A673 (cell line): ENCODE measurements at regions of chr7 and their contacts with region 1.

Region 1: GRCh38 chr7:122304319-122304975 is at the start of gene FEZF1:
- DNase-seq: peak; percentile 97
- H3K4me3 ChIP-seq: peak within 1 kb of the TSS; percentile 84
- H3K27ac ChIP-seq: peak within 1 kb of the TSS; percentile 100
- H3K4me1 ChIP-seq: peaks cover 15% of the 10 kb centered on the region
- H3K27me3 ChIP-seq: no peaks in the 10 kb centered on the region
- CTCF ChIP-seq: no peak
- total RNA-seq, gene FEZF1: 85.9 and 114 TPM in 2 replicates

Region 2: GRCh38 chr7:121824276-121824675 is 480.2 kb before region 1 on chr7:
- CTCF ChIA-PET with region 1: no interaction called
- POLR2A ChIA-PET with region 1: no interaction called
- intact Hi-C with region 1: no loop called
- DNase-seq: no peak
- H3K4me3 ChIP-seq: no peak overlapping the region
- H3K27ac ChIP-seq: no peak overlapping the region
- H3K4me1 ChIP-seq: no peaks in the 10 kb centered on the region
- H3K27me3 ChIP-seq: no peaks in the 10 kb centered on the region
- CTCF ChIP-seq: no peak

Region 3: DNA sequence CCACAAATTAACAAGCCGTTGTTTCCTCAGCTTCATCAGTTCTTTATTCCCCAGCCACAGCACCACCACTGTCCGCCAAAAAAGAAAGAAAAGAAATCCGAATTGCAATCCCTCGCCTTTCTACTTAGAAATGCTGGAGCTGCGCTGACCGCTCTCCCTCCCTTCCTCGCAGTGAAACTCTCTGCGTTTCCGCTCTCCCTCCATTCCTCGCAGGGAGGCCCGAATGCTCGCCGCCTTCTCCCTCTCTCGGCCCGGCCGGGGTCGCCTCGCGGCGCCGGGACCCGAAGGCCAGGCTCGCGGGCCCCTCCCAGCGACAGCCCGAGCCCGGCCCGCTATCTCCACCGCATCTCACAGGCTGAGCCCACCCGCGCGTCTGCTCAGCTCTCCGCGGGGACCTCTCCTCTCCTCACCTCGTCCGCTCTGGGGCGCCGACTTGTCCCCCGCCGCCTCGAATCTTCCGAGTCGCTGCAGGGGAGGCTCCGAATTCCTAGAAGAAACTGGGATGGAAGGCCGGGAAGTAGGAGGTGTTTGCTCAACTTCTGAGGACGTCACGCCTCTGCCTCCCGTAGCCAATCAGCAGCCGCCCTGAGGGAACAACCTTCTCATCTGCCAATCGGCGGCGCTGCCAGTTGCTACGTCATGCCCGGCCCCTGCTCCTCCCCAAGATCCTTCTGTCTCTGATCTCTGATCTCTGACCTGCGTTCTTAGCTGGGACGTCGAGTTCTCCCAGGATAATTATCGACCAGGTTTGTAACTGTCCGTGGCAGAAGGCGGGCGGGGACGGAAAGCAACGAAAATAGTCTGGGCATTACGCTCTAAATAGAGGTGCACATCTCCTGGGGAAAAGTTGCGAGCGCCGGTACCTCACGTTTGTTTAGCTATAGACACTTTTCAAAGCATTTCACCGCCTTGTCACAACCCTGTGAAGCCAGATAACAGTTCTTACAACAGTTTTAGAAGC is 160.4 kb before region 1 on chr7 and contains the start of gene AASS:
- CTCF ChIA-PET with region 1: no interaction called
- POLR2A ChIA-PET with region 1: no interaction called
- intact Hi-C with region 1: loop called (anchors 5 kb)
- DNase-seq: peak; percentile 98
- H3K4me3 ChIP-seq: peak within 1 kb of the TSS; percentile 82
- H3K27ac ChIP-seq: peak within 1 kb of the TSS; percentile 89
- H3K4me1 ChIP-seq: peaks cover 29% of the 10 kb centered on the region
- H3K27me3 ChIP-seq: no peaks in the 10 kb centered on the region
- CTCF ChIP-seq: no peak
- total RNA-seq, gene AASS: 38.8 and 44.4 TPM in 2 replicates

Region 4: GRCh38 chr7:122256036-122256435 is 48.4 kb before region 1 on chr7:
- CTCF ChIA-PET with region 1: no interaction called
- POLR2A ChIA-PET with region 1: no interaction called
- intact Hi-C with region 1: loop called (anchors 1 kb)
- DNase-seq: peak; percentile 81
- H3K4me3 ChIP-seq: no peak overlapping the region
- H3K27ac ChIP-seq: peak overlapping the region; percentile 41
- H3K4me1 ChIP-seq: peaks cover 44% of the 10 kb centered on the region
- H3K27me3 ChIP-seq: no peaks in the 10 kb centered on the region
- CTCF ChIP-seq: no peak

Region 5: DNA sequence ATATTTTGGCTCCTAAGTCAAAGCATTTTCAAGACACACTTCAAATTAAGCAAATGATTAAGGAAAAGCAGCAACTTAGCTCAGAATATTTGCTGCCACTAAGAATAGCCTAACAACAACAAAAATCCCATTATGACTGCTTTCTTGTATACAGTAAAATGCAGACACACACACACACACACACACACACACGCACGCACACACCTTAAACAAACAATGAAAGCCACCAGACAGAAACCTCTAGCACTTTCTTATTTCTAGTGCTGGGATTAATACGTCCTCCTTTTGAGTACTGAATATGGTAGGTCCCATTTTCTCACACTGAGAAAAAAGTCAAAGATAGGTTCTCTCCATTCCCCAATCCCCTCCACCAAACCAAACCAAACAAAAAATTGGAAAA is 23.5 kb after region 1 on chr7:
- CTCF ChIA-PET with region 1: no interaction called
- POLR2A ChIA-PET with region 1: no interaction called
- intact Hi-C with region 1: no loop called
- DNase-seq: no peak
- H3K4me3 ChIP-seq: no peak overlapping the region
- H3K27ac ChIP-seq: no peak overlapping the region
- H3K4me1 ChIP-seq: no peaks in the 10 kb centered on the region
- H3K27me3 ChIP-seq: no peaks in the 10 kb centered on the region
- CTCF ChIP-seq: no peak

Region 6: DNA sequence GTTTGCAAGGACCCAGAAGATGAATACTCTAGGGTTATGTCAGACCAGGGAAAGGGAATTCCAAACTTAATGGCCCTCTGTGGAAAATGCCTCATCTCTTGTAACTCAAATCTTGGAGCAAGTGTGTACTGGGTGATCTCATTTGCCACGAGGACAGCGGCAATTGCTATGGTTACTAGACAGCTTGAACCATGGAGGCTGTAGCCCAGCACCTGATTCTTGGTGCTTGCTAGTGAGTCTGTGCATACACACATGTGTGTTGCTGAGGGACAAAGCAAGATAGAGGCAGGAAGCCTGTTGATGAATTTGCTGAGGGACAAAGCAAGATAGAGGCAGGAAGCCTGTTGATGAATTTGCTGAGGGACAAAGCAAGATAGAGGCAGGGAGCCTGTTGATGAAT is 58.7 kb after region 1 on chr7:
- CTCF ChIA-PET with region 1: no interaction called
- POLR2A ChIA-PET with region 1: no interaction called
- intact Hi-C with region 1: no loop called
- DNase-seq: no peak
- H3K4me3 ChIP-seq: no peak overlapping the region
- H3K27ac ChIP-seq: no peak overlapping the region
- H3K4me1 ChIP-seq: no peaks in the 10 kb centered on the region
- H3K27me3 ChIP-seq: no peaks in the 10 kb centered on the region
- CTCF ChIP-seq: no peak

Region 7: GRCh38 chr7:122528879-122529481 is 224.5 kb after region 1 on chr7:
- CTCF ChIA-PET with region 1: interaction called, 3 read pairs
- POLR2A ChIA-PET with region 1: no interaction called
- intact Hi-C with region 1: loop called (anchors 5 kb)
- DNase-seq: peak; percentile 70
- H3K4me3 ChIP-seq: no peak overlapping the region
- H3K27ac ChIP-seq: no peak overlapping the region
- H3K4me1 ChIP-seq: peaks cover 23% of the 10 kb centered on the region
- H3K27me3 ChIP-seq: no peaks in the 10 kb centered on the region
- CTCF ChIP-seq: peak; percentile 67

Region 8: DNA sequence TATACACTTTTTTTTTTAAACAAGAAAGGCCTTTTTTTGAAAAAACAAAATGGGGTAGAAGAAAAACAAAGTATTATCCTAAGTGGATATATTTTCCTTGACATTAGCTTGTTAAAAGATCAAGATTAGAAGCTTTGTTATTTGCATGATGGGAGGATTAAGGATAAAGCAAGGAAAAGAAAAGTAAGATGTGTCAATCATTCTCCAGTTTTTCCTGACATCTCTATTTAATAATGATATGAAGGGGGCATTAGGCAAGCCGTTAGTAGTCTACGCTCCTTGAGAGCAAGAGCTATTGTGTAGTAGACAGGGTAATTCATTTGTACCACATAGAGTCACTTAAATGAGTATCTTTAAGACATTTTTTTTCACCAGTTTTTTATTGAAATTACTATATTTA is 256.9 kb after region 1 on chr7:
- CTCF ChIA-PET with region 1: no interaction called
- POLR2A ChIA-PET with region 1: no interaction called
- intact Hi-C with region 1: no loop called
- DNase-seq: no peak
- H3K4me3 ChIP-seq: no peak overlapping the region
- H3K27ac ChIP-seq: no peak overlapping the region
- H3K4me1 ChIP-seq: peaks cover 18% of the 10 kb centered on the region
- H3K27me3 ChIP-seq: no peaks in the 10 kb centered on the region
- CTCF ChIP-seq: no peak

Region 9: DNA sequence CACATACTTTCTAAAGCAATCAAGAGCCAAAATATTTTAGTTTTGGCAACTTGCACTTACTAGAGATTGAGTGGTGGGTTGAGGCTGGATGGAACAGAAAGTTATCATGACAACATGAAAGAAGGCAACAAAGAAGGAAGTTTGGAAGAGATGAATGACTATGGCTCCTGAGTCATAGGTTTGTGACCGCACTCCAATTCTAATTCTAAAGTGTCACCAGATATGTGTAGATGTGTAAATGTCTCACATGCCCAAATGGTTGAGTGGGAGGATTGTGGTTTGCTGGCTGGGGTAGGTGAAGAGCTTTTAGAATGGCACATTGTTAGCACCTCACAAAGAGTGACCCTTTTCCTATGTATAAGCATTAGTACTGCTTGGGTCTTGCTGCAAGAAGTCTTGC is 670.9 kb after region 1 on chr7:
- CTCF ChIA-PET with region 1: interaction called, 3 read pairs
- POLR2A ChIA-PET with region 1: no interaction called
- intact Hi-C with region 1: loop called (anchors 2 kb)
- DNase-seq: no peak
- H3K4me3 ChIP-seq: no peak overlapping the region
- H3K27ac ChIP-seq: peak overlapping the region; percentile 35
- H3K4me1 ChIP-seq: peaks cover 36% of the 10 kb centered on the region
- H3K27me3 ChIP-seq: no peaks in the 10 kb centered on the region
- CTCF ChIP-seq: no peak

Region 10: GRCh38 chr7:123154231-123154860 is 849.9 kb after region 1 on chr7:
- CTCF ChIA-PET with region 1: no interaction called
- POLR2A ChIA-PET with region 1: no interaction called
- intact Hi-C with region 1: loop called (anchors 5 kb)
- DNase-seq: peak; percentile 95
- H3K4me3 ChIP-seq: no peak overlapping the region
- H3K27ac ChIP-seq: peak overlapping the region; percentile 43
- H3K4me1 ChIP-seq: peaks cover 37% of the 10 kb centered on the region
- H3K27me3 ChIP-seq: no peaks in the 10 kb centered on the region
- CTCF ChIP-seq: peak; percentile 89